Activated CD8-positive, alpha-beta T cell treated with anti-CD3 and anti-CD28 coated beads for 36 hours (primary cell): ENCODE measurements at regions of chr5 and their contacts with region 1.

Region 1: DNA sequence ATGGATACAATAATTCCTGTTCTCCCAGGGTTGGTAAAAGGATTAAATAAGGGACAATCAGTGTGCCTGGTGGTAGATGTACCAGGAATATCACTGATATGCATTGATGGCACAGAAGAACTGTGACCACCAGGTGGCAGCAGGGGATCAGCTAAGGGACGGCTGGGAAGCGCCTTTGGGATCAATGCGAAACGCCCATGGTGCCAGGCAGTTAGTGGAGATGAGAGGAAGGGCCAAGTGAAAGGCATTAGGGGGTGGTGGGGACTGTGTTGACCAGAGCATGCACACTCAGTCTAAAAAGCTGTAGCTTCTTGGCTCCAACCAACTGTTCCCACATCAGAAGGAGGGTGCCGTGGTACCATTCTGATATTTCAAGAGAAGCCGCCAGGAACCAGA is 55.6 kb downstream of the ARHGEF37 start:
- DNase-seq: peak; percentile 81
- ATAC-seq: peak; percentile 65
- H3K4me3 Mint-ChIP-seq: no peak overlapping the region
- H3K27ac Mint-ChIP-seq: no peak overlapping the region
- H3K4me1 Mint-ChIP-seq: peaks cover 19% of the 10 kb centered on the region
- H3K27me3 Mint-ChIP-seq: no peaks in the 10 kb centered on the region
- CTCF ChIP-seq: peak; percentile 98

Region 2: GRCh38 chr5:148897842-148898241 is 739.0 kb before region 1 on chr5:
- CTCF ChIA-PET with region 1: no interaction called
- POLR2A ChIA-PET with region 1: no interaction called
- intact Hi-C with region 1: no loop called
- DNase-seq: no peak
- ATAC-seq: no peak
- H3K4me3 Mint-ChIP-seq: no peak overlapping the region
- H3K27ac Mint-ChIP-seq: no peak overlapping the region
- H3K4me1 Mint-ChIP-seq: no peaks in the 10 kb centered on the region
- H3K27me3 Mint-ChIP-seq: peaks cover 7% of the 10 kb centered on the region
- CTCF ChIP-seq: no peak

Region 3: GRCh38 chr5:149656576-149657182 is 19.8 kb after region 1 on chr5:
- CTCF ChIA-PET with region 1: interaction called, 12 read pairs
- POLR2A ChIA-PET with region 1: no interaction called
- intact Hi-C with region 1: no loop called
- DNase-seq: peak; percentile 63
- ATAC-seq: no peak
- H3K4me3 Mint-ChIP-seq: no peak overlapping the region
- H3K27ac Mint-ChIP-seq: no peak overlapping the region
- H3K4me1 Mint-ChIP-seq: no peaks in the 10 kb centered on the region
- H3K27me3 Mint-ChIP-seq: peaks cover 2% of the 10 kb centered on the region
- CTCF ChIP-seq: peak; percentile 87

Region 4: GRCh38 chr5:149828161-149828884 is 191.5 kb after region 1 on chr5:
- CTCF ChIA-PET with region 1: interaction called, 111 read pairs
- POLR2A ChIA-PET with region 1: interaction called, 3 read pairs
- intact Hi-C with region 1: loop called (anchors 1 kb)
- DNase-seq: peak; percentile 93
- ATAC-seq: peak; percentile 65
- H3K4me3 Mint-ChIP-seq: no peak overlapping the region
- H3K27ac Mint-ChIP-seq: peak overlapping the region; percentile 52
- H3K4me1 Mint-ChIP-seq: peaks cover 11% of the 10 kb centered on the region
- H3K27me3 Mint-ChIP-seq: no peaks in the 10 kb centered on the region
- CTCF ChIP-seq: peak; percentile 88

Region 5: DNA sequence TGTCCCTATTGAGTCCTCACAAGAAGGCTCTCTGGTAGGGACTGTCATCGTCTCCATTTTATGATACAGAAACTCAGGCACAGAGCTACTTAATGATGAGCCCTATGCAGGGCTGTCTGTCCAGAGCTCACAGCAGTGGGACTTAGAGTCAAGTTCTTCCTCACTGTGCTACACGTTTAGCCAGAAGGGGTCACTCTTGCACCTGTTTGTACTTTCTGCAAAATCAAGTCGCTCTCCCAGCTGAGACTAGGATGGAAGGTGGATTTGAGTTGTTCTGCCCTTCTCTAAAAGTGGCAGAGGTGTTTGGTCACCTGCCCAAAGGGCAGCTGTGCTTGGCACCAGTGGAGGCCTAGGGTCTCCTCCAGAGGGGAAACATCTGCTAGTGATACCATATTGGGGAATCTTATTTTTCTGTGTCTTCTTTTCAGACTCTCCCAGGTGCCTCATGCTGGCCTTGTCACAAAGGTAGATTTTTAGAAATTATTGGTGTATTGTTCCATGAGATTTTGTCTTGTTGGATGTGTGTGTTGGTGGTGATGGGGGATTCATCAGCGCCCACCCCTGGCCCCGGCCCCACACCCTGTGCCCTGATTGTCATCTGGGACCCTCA is 197.5 kb after region 1 on chr5:
- CTCF ChIA-PET with region 1: interaction called, 111 read pairs
- POLR2A ChIA-PET with region 1: interaction called, 3 read pairs
- intact Hi-C with region 1: no loop called
- DNase-seq: peak; percentile 75
- ATAC-seq: peak; percentile 48
- H3K4me3 Mint-ChIP-seq: no peak overlapping the region
- H3K27ac Mint-ChIP-seq: no peak overlapping the region
- H3K4me1 Mint-ChIP-seq: peaks cover 9% of the 10 kb centered on the region
- H3K27me3 Mint-ChIP-seq: no peaks in the 10 kb centered on the region
- CTCF ChIP-seq: peak; percentile 63

Region 6: DNA sequence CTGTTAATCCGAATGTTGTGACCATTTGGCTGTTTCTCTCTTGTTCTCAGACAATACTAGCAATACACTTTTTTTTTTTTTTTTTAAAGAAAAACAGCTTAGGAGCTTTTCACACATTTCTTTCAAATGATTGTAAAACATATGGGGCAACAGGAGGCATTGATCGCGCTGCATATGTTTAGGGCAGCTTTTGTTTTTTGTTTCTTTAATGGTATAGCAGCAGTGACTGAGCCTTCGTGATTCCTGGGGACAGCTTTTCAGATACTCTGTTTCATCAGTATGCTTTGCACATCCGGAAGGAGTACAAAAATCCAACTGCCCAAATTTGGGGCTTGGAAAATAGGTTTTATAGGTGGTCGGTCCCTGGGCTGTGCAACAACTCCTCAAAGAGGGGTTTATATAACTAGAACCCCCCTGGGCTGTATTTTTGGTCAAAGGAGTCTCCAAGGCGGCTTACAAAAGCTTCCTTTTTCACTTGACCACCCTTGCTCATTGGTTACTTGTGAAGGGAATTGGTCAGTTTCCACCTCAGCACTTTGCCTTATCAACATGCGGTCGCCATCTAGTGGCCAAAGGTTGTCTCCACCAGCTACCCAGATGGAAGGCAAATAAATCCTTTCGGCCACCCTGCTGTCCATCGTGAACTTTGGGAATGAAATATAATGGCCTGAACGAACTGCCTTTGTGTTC is 215.9 kb after region 1 on chr5:
- CTCF ChIA-PET with region 1: interaction called, 17 read pairs
- POLR2A ChIA-PET with region 1: no interaction called
- intact Hi-C with region 1: no loop called
- DNase-seq: peak; percentile 67
- ATAC-seq: peak; percentile 58
- H3K4me3 Mint-ChIP-seq: no peak overlapping the region
- H3K27ac Mint-ChIP-seq: no peak overlapping the region
- H3K4me1 Mint-ChIP-seq: no peaks in the 10 kb centered on the region
- H3K27me3 Mint-ChIP-seq: no peaks in the 10 kb centered on the region
- CTCF ChIP-seq: peak; percentile 85